Testis (tissue), 5 donors: ENCODE measurements at regions of chr9 and their contacts with region 1.

Region 1: GRCh38 chr9:117434566-117434965 is 19.7 kb upstream of the ASTN2 start:
- DNase-seq: no peak
- H3K4me3 ChIP-seq: no peak overlapping the region
- H3K27ac ChIP-seq: no peak overlapping the region
- H3K4me1 ChIP-seq: no peaks in the 10 kb centered on the region
- H3K27me3 ChIP-seq: no peaks in the 10 kb centered on the region
- CTCF ChIP-seq: no peak
- POLR2A ChIP-seq: no peak

Region 2: DNA sequence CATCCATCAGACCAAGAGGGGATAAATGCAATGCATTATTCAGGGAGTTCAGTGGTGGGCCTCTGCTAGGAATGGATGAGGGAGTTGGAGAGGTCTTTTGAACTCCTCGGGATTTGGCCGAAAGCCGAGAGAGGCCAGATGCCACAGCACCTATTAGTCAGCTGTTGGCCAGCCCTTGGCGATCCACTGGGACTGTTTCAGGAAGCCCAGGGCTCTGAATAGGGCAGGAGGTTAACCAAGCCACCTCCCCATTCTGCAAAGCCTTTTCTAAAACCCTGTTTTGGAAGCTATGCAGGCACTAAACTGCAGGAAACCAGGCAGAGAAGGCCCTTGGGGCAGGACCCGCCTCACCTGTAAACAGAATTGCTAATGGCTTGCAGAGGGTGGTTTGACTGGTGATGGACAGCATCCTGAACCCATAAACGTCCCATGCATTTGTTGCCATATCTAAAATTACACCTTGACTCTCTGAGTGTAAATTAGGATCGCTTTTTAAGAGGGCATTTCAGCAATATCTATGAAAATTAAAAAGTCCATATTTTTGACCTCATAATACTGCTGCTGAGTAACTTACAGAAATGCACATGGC is 57.4 kb before region 1 on chr9:
- intact Hi-C with region 1: loop called (anchors 10 kb)
- DNase-seq: no peak
- H3K4me3 ChIP-seq: no peak overlapping the region
- H3K27ac ChIP-seq: no peak overlapping the region
- H3K4me1 ChIP-seq: no peaks in the 10 kb centered on the region
- H3K27me3 ChIP-seq: no peaks in the 10 kb centered on the region
- CTCF ChIP-seq: no peak
- POLR2A ChIP-seq: no peak